CD4-positive, alpha-beta T cell (primary cell): ENCODE measurements at regions of chr2 and their contacts with region 1.

Region 1: GRCh38 chr2:157443795-157444640 is at the start of gene CYTIP:
- DNase-seq: peak in 11 of 14 experiments; percentile 35 to 93 (median 64)
- ATAC-seq: peak; percentile 41
- H3K4me3 ChIP-seq: peak within 1 kb of the TSS; percentile 72
- H3K4me3 Mint-ChIP-seq: peak within 1 kb of the TSS; percentile 95
- H3K27ac ChIP-seq: peak within 1 kb of the TSS; percentile 46 to 97
- H3K27ac Mint-ChIP-seq: peak within 1 kb of the TSS; percentile 97
- H3K4me1 ChIP-seq: peaks cover 9% of the 10 kb centered on the region
- H3K4me1 Mint-ChIP-seq: peaks cover 41% of the 10 kb centered on the region
- H3K27me3 ChIP-seq: no peaks in the 10 kb centered on the region
- H3K27me3 Mint-ChIP-seq: no peaks in the 10 kb centered on the region
- CTCF ChIP-seq: no peak
- total RNA-seq, gene CYTIP: 474 to 490 TPM

Region 2: GRCh38 chr2:157404363-157404762 is 39.7 kb before region 1 on chr2:
- CTCF ChIA-PET with region 1: interaction called, 4 read pairs
- POLR2A ChIA-PET with region 1: interaction called, 258 read pairs
- intact Hi-C with region 1: loop called (anchors 1 to 5 kb)
- DNase-seq: peak; percentile 53 to 93 (median 66)
- ATAC-seq: peak; percentile 91
- H3K4me3 ChIP-seq: no peak overlapping the region
- H3K4me3 Mint-ChIP-seq: peak overlapping the region; percentile 74
- H3K27ac ChIP-seq: peak overlapping the region; percentile 58 to 94
- H3K27ac Mint-ChIP-seq: peak overlapping the region; percentile 99
- H3K4me1 ChIP-seq: peaks cover 33% of the 10 kb centered on the region
- H3K4me1 Mint-ChIP-seq: peaks cover 82% of the 10 kb centered on the region
- H3K27me3 ChIP-seq: no peaks in the 10 kb centered on the region
- H3K27me3 Mint-ChIP-seq: no peaks in the 10 kb centered on the region
- CTCF ChIP-seq: no peak

Region 3: GRCh38 chr2:157427003-157427921 is 16.8 kb before region 1 on chr2:
- CTCF ChIA-PET with region 1: interaction called, 4 read pairs
- POLR2A ChIA-PET with region 1: interaction called, 384 read pairs
- intact Hi-C with region 1: no loop called
- DNase-seq: no peak
- ATAC-seq: peak; percentile 3
- H3K4me3 ChIP-seq: no peak overlapping the region
- H3K4me3 Mint-ChIP-seq: peak overlapping the region; percentile 63
- H3K27ac ChIP-seq: peak overlapping the region; percentile 6
- H3K27ac Mint-ChIP-seq: peak overlapping the region; percentile 97
- H3K4me1 ChIP-seq: peaks cover 30% of the 10 kb centered on the region
- H3K4me1 Mint-ChIP-seq: peaks cover 85% of the 10 kb centered on the region
- H3K27me3 ChIP-seq: no peaks in the 10 kb centered on the region
- H3K27me3 Mint-ChIP-seq: no peaks in the 10 kb centered on the region
- CTCF ChIP-seq: no peak

Region 4: GRCh38 chr2:157468931-157469708 is 25.1 kb after region 1 on chr2:
- CTCF ChIA-PET with region 1: interaction called, 5 read pairs
- POLR2A ChIA-PET with region 1: interaction called, 118 read pairs
- intact Hi-C with region 1: loop called in 1 of 2 experiments (anchors 1 kb)
- DNase-seq: peak in 3 of 14 experiments; percentile 81 to 86 (median 84)
- ATAC-seq: peak; percentile 89
- H3K4me3 ChIP-seq: peak overlapping the region; percentile 11
- H3K4me3 Mint-ChIP-seq: peak overlapping the region; percentile 74
- H3K27ac ChIP-seq: peak overlapping the region; percentile 80 to 88
- H3K27ac Mint-ChIP-seq: peak overlapping the region; percentile 98
- H3K4me1 ChIP-seq: peaks cover 31% of the 10 kb centered on the region
- H3K4me1 Mint-ChIP-seq: peaks cover 64% of the 10 kb centered on the region
- H3K27me3 ChIP-seq: no peaks in the 10 kb centered on the region
- H3K27me3 Mint-ChIP-seq: no peaks in the 10 kb centered on the region
- CTCF ChIP-seq: no peak

Region 5: DNA sequence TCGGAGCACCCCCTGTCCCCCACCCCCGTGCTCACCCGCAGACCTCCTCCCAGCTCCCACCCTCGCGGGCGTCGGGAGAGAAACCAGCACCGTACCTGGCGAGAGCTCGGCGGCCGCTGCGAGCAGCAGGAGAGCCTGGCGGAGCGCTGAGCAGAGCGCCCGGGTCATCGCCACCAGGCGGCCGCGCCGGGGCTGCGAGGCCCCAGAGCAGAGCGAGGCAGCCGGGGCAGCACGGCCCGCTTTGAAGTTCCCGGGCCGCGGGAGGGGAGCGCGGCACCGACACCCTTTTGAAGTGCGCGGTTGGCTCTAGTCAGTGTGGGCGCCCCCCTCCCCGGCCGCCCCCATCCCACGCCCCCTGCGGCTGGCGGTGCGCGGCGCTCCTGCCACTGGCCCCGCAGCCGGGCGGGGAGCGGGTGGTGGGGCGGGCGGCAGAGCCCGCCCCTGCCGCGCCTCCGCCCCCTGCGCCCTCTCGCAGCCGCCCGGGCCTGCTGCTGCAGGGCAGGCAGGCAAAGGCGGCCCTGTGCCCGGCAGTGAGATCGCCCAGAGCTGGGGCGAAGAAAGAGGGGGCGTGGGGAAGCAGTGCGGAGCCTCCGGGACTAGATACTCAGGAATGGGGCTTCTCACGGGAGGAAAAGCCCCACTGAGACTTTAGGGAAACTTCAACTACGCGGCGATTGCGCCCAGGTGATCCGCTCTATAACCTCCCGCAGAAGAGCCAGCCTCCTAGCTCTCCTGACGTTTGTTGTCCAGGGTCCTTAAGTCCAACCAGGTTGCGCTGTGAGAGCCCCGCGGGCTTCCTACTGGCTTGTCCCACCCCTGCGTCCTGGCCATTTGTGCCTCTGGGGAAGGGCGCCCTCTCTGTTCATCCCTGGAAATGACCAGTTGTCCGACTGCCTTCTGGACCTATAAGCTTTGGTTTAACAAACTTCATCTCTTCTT is 184.7 kb after region 1 on chr2 and contains the start of gene ACVR1C:
- CTCF ChIA-PET with region 1: no interaction called
- POLR2A ChIA-PET with region 1: interaction called, 9 read pairs
- intact Hi-C with region 1: loop called in 1 of 2 experiments (anchors 10 kb)
- DNase-seq: peak; percentile 42 to 92 (median 61)
- ATAC-seq: peak; percentile 77
- H3K4me3 ChIP-seq: peak within 1 kb of the TSS; percentile 81
- H3K4me3 Mint-ChIP-seq: peak within 1 kb of the TSS; percentile 97
- H3K27ac ChIP-seq: peak within 1 kb of the TSS in 1 of 2 donors; percentile 74
- H3K27ac Mint-ChIP-seq: peak within 1 kb of the TSS; percentile 86
- H3K4me1 ChIP-seq: peaks cover 22% of the 10 kb centered on the region
- H3K4me1 Mint-ChIP-seq: peaks cover 40% of the 10 kb centered on the region
- H3K27me3 ChIP-seq: no peaks in the 10 kb centered on the region
- H3K27me3 Mint-ChIP-seq: no peaks in the 10 kb centered on the region
- CTCF ChIP-seq: peak; percentile 43
- total RNA-seq, gene ACVR1C: 5.2 to 6.2 TPM

Region 6: GRCh38 chr2:157662401-157662800 is 218.4 kb after region 1 on chr2:
- CTCF ChIA-PET with region 1: no interaction called
- POLR2A ChIA-PET with region 1: no interaction called
- intact Hi-C with region 1: no loop called
- DNase-seq: no peak
- ATAC-seq: no peak
- H3K4me3 ChIP-seq: no peak overlapping the region
- H3K4me3 Mint-ChIP-seq: no peak overlapping the region
- H3K27ac ChIP-seq: no peak overlapping the region
- H3K27ac Mint-ChIP-seq: no peak overlapping the region
- H3K4me1 ChIP-seq: no peaks in the 10 kb centered on the region
- H3K4me1 Mint-ChIP-seq: no peaks in the 10 kb centered on the region
- H3K27me3 ChIP-seq: no peaks in the 10 kb centered on the region
- H3K27me3 Mint-ChIP-seq: no peaks in the 10 kb centered on the region
- CTCF ChIP-seq: no peak

Region 7: GRCh38 chr2:158968396-158969161 is 1524.6 kb after region 1 on chr2 and contains the start of gene TANC1:
- CTCF ChIA-PET with region 1: no interaction called
- POLR2A ChIA-PET with region 1: no interaction called
- intact Hi-C with region 1: no loop called
- DNase-seq: peak in 12 of 14 experiments; percentile 2 to 70 (median 38)
- ATAC-seq: peak; percentile 76
- H3K4me3 ChIP-seq: peak within 1 kb of the TSS; percentile 55
- H3K4me3 Mint-ChIP-seq: peak within 1 kb of the TSS; percentile 81
- H3K27ac ChIP-seq: no peak within 1 kb of the TSS
- H3K27ac Mint-ChIP-seq: no peak within 1 kb of the TSS
- H3K4me1 ChIP-seq: peaks cover 23% of the 10 kb centered on the region
- H3K4me1 Mint-ChIP-seq: peaks cover 16% of the 10 kb centered on the region
- H3K27me3 ChIP-seq: peaks cover 28 to 44% of the 10 kb centered on the region in 2 experiments
- H3K27me3 Mint-ChIP-seq: peaks cover 58% of the 10 kb centered on the region
- CTCF ChIP-seq: no peak
- total RNA-seq, gene TANC1: 0.41 to 0.47 TPM